Head of caudate nucleus (tissue), 42 donors: ENCODE measurements at regions of chr1 and their contacts with region 1.

Region 1: DNA sequence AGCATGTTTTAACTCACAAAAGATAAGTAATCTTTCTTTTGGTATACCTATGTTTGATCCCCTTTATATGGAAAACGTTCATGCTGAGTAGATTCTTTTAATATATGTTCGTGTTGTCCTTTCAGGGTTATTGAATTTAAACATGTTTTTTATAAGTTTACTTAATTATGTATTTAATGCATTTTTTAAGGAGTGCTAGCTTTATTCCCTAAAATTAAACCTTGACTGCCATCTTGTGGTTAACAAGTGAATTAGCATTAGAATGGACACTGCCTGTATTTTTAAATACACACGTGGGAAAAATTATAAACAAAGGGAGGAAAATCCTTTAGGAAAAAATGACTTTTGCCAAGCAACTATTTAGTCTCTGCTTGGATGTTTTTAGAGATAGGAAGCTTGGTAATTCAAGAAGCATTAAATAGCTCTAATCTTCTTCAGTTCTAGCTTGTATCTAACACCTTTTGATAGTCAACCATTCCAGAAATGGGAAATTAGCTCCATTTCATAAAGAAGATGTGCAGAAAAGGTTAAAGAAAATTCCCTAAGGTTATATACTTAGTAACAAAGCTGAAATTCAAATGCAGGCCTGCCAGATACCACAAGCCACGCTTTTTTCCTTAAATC is 43.0 kb downstream of the UBE2U start:
- DNase-seq: no peak

Region 2: GRCh38 chr1:63615768-63616420 is 630.5 kb before region 1 on chr1:
- intact Hi-C with region 1: loop called (anchors 5 kb)
- DNase-seq: peak in 33 of 42 donors; percentile 14 to 89 (median 60)

Region 3: GRCh38 chr1:63674238-63674864 is 572.1 kb before region 1 on chr1:
- intact Hi-C with region 1: loop called (anchors 5 kb)
- DNase-seq: peak; percentile 19 to 84 (median 58)

Region 4: GRCh38 chr1:63691701-63692425 is 554.5 kb before region 1 on chr1:
- intact Hi-C with region 1: loop called (anchors 5 kb)
- DNase-seq: peak in 29 of 42 donors; percentile 22 to 84 (median 58)

Region 5: DNA sequence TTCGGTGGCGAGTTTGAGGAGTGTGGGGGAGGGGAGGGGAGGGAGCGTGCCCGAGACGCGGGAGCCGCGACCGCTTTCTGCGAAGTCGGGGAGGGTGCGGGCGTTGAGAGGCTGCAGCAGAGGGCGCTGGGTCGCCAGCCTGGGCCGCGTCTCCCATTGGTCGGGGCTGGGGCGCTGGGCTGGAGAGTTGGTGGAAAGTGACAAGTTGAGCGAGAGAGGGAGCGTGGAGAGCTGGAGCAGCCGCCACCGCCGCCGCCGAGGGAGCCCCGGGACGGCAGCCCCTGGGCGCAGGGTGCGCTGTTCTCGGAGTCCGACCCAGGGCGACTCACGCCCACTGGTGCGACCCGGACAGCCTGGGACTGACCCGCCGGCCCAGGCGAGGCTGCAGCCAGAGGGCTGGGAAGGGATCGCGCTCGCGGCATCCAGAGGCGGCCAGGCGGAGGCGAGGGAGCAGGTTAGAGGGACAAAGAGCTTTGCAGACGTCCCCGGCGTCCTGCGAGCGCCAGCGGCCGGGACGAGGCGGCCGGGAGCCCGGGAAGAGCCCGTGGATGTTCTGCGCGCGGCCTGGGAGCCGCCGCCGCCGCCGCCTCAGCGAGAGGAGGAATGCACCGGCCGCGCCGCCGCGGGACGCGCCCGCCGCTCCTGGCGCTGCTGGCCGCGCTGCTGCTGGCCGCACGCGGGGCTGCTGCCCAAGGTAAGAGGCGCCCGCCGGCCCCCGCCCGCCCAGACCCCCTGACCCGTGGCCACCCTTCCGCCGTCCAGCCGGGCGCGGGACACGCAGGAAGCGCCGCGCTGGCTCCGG is 472.4 kb before region 1 on chr1 and contains the start of gene ROR1:
- intact Hi-C with region 1: loop called (anchors 10 kb)
- DNase-seq: peak; percentile 59 to 97 (median 89)